Activated CD4-positive, alpha-beta memory T cell treated with anti-CD3 and anti-CD28 coated beads, Interleukin-2, amount 10 ng/mL, durations not matched to agents 7 days and 5 days (primary cell): ENCODE measurements at regions of chr1 and their contacts with region 1.

Region 1: GRCh38 chr1:182084487-182085316 is 23.2 kb upstream of the ZNF648 start:
- DNase-seq: peak; percentile 88
- H3K4me3 Mint-ChIP-seq: no peak overlapping the region
- H3K27ac Mint-ChIP-seq: peak overlapping the region; percentile 61
- H3K4me1 Mint-ChIP-seq: peaks cover 55% of the 10 kb centered on the region
- H3K27me3 Mint-ChIP-seq: no peaks in the 10 kb centered on the region

Region 2: DNA sequence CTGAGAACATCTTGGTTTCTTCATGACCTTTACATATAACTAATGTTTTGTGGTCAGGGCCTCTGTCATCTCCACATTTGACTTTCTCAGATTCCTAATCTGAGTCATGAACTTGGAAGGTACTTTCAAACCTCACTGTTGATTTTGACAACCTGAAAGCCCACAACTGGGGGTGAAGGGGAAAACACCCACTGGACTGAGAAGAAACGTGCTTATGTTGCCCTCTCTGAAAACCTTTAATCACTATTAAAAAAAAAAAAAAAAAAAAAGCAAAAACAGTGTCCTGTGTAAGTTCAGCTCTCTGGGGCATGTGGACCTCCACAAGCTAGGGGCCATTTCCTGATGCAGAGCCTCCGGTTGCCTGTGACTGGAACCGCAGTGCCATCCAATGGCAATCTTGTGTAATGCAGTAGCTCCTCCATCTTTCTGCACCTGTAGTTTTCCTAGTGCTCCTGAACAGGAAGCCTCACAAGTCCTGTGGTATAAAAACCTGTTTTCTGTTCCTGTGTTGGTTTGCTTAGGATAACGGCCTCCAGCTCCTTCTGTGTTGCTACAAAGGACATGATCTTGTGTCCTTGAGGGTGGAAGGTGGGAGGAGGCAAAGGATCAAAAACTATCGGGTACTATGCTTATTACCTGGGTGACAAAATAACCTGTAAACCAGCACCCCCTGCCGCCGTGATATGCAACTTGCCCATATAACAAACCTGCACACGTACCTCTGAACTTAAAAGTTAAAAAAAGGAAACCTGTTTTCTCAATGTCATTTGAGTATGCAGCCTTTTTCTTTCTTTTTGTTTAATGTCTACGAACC is 147.7 kb before region 1 on chr1:
- CTCF ChIA-PET with region 1: interaction called, 11 read pairs
- POLR2A ChIA-PET with region 1: no interaction called
- DNase-seq: peak; percentile 44
- H3K4me3 Mint-ChIP-seq: no peak overlapping the region
- H3K27ac Mint-ChIP-seq: no peak overlapping the region
- H3K4me1 Mint-ChIP-seq: peaks cover 1% of the 10 kb centered on the region
- H3K27me3 Mint-ChIP-seq: no peaks in the 10 kb centered on the region

Region 3: DNA sequence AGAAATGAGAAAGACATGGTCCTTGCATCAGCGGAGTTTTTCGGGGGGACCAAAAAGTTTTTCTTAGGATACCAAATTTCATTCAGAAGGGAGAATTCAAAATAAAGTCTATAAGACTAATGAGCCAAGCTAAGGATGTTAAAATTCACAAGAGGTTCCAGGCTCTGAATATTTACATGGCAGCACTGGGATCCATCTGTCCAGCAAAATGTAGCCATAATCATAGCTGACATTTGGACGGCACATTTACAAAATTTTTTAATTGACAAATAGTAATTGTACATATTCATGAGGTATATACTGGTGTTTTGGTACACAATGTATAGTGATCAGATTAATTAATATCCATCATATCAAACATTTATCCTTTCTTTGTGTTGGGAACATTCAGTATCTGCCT is 131.1 kb before region 1 on chr1:
- CTCF ChIA-PET with region 1: no interaction called
- POLR2A ChIA-PET with region 1: no interaction called
- DNase-seq: no peak
- H3K4me3 Mint-ChIP-seq: no peak overlapping the region
- H3K27ac Mint-ChIP-seq: no peak overlapping the region
- H3K4me1 Mint-ChIP-seq: no peaks in the 10 kb centered on the region
- H3K27me3 Mint-ChIP-seq: peaks cover 2% of the 10 kb centered on the region

Region 4: GRCh38 chr1:182069028-182069466 is 15.7 kb before region 1 on chr1:
- CTCF ChIA-PET with region 1: interaction called, 48 read pairs
- POLR2A ChIA-PET with region 1: no interaction called
- DNase-seq: peak; percentile 41
- H3K4me3 Mint-ChIP-seq: no peak overlapping the region
- H3K27ac Mint-ChIP-seq: no peak overlapping the region
- H3K4me1 Mint-ChIP-seq: no peaks in the 10 kb centered on the region
- H3K27me3 Mint-ChIP-seq: peaks cover 25% of the 10 kb centered on the region

Region 5: GRCh38 chr1:182143154-182143657 is 58.5 kb after region 1 on chr1:
- CTCF ChIA-PET with region 1: interaction called, 90 read pairs
- POLR2A ChIA-PET with region 1: interaction called, 4 read pairs
- DNase-seq: peak; percentile 87
- H3K4me3 Mint-ChIP-seq: no peak overlapping the region
- H3K27ac Mint-ChIP-seq: no peak overlapping the region
- H3K4me1 Mint-ChIP-seq: peaks cover 28% of the 10 kb centered on the region
- H3K27me3 Mint-ChIP-seq: peaks cover 8% of the 10 kb centered on the region